Heart left ventricle (tissue), 16 donors: ENCODE measurements at regions of chr19 and their contacts with region 1.

Region 1: GRCh38 chr19:37466798-37467607 is at the start of gene ZNF569:
- DNase-seq: peak; percentile 90 to 93 (median 92)
- ATAC-seq: peak; percentile 82 to 88 (median 85)
- H3K4me3 ChIP-seq: peak within 1 kb of the TSS; percentile 51 to 95 (median 81)
- H3K27ac ChIP-seq: peak within 1 kb of the TSS; percentile 74 to 99 (median 96)
- H3K4me1 ChIP-seq: peaks cover 0 to 32% (median 25%) of the 10 kb centered on the region in 12 donors
- H3K27me3 ChIP-seq: no peaks in the 10 kb centered on the region
- CTCF ChIP-seq: peak in 1 of 12 donors; percentile 25
- POLR2A ChIP-seq: peak in 1 of 2 donors; percentile 46
- total RNA-seq, gene ZNF569: 5.4 to 8.0 (median 6.1) TPM

Region 2: DNA sequence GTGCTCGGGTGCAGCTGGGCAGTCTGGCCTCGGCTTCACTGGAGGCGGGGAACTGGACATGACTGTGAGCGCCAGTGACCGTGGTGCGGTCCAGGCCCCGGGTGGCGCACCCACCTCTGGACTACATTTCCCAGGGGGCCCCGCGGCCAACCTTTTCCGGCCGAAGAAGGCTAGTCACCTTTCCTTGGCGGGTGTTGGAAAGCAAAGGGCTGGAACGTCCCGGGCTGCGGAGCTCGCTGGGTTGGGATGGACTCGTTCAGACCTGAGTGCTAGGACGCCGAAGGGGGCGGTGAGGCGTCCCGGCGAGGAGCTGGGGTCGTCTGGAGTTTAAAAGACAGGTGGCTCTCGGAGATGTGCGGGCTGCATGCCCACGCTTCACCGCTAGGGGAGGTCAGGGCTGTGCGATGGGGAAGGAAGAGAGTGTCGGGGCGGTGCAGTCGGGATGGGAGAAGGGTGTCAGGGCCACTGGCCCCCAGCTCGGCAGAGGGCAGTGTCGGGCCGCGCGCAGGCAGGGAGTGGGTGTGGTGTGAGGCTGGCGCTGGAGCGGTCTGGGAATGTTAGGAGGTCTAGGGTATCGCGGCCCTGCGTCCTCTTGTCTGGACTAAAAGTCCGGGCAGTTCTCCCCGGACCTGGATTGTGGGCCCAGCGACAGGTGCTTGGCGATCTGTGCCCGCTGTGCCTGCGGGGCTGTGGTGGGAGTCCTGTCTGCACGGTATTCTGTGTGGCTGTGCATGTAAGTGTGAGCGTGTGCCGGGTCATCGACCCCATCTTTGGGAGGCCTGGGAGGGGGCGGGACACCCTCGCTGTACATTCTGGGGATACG is 493.8 kb before region 1 on chr19:
- intact Hi-C with region 1: loop called in 2 of 10 experiments (anchors 2 to 5 kb)
- DNase-seq: peak; percentile 88 to 94 (median 90)
- ATAC-seq: peak; percentile 99 to 100 (median 100)
- H3K4me3 ChIP-seq: peak overlapping the region; percentile 24 to 91 (median 72)
- H3K27ac ChIP-seq: peak overlapping the region in 11 of 12 donors; percentile 41 to 89 (median 78)
- H3K4me1 ChIP-seq: peaks cover 0 to 21% (median 11%) of the 10 kb centered on the region in 12 donors
- H3K27me3 ChIP-seq: no peaks in the 10 kb centered on the region
- CTCF ChIP-seq: peak; percentile 74 to 97 (median 92)
- POLR2A ChIP-seq: peak in 1 of 2 donors; percentile 28

Region 3: GRCh38 chr19:37309834-37310575 is 157.0 kb before region 1 on chr19:
- intact Hi-C with region 1: loop called in 3 of 10 experiments (anchors 10 kb)
- DNase-seq: no peak
- ATAC-seq: no peak
- H3K4me3 ChIP-seq: no peak overlapping the region
- H3K27ac ChIP-seq: no peak overlapping the region
- H3K4me1 ChIP-seq: peaks cover 0 to 10% (median 2%) of the 10 kb centered on the region in 12 donors
- H3K27me3 ChIP-seq: no peaks in the 10 kb centered on the region
- CTCF ChIP-seq: peak in 1 of 12 donors; percentile 12
- POLR2A ChIP-seq: no peak

Region 4: DNA sequence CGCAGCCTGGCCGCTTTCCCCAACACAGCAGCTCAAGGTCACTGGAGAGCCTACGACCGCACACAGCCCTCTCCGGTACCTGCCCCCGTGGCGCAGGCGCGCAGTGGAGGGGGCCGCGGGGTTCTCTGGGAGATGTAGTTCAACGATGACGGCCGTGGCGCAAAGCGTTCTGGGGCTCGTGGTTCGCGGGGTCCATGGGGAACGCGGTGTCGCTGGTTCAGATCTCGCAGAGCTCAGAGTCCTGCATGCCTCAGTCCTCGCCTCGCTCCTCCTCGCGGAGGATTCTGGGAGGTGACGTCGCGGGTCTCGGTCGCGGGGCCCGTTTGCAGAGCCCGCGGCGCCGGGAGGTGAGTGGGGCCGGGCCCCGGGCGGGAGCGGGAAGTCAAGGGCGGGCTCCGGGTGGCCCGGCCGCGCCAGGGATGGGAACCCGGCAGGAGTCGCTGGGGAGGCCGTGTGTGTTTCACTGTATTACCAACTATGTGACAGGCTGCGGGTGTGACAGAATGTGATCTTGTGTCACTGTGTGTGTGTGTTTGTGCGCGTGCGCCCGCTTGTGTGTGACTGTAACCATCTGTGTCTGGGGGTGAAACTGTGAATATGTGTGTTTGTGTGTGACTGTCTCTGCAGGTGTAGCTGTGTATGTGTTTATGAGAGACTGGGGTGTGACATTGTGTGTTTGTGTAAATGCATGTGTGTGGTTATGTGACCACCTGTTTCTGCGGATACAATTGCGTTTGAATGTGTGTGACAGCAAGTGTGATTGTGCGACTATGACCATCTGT is 95.9 kb before region 1 on chr19 and contains the start of gene ZNF527:
- intact Hi-C with region 1: loop called in 6 of 10 experiments (anchors 2 to 5 kb)
- DNase-seq: peak; percentile 98 to 99 (median 99)
- ATAC-seq: peak; percentile 99
- H3K4me3 ChIP-seq: peak within 1 kb of the TSS; percentile 39 to 93 (median 78)
- H3K27ac ChIP-seq: peak within 1 kb of the TSS; percentile 66 to 94 (median 89)
- H3K4me1 ChIP-seq: peaks cover 0 to 16% (median 9%) of the 10 kb centered on the region in 12 donors
- H3K27me3 ChIP-seq: no peaks in the 10 kb centered on the region
- CTCF ChIP-seq: peak in 2 of 12 donors; percentile 9 to 25
- POLR2A ChIP-seq: peak; percentile 40 to 95
- total RNA-seq, gene ZNF527: 3.9 to 9.3 (median 6.1) TPM

Region 5: DNA sequence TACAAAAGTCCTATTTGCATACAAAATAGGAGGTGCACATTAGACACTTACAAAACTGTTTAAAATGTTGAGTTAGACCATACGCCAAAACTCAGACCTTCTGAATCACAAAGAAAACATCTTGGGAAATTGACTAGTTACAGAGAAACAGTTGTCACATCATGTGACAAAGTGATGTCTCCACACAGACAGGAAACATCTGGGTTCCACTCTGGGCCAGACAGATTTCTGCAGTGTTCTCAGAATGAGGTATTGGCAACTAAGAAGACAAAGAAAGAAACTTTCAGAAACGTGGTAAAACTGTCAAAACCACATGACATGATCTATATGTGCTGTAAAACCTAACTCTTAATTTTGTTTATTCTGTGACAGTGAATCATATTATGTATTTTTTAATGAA is 46.4 kb after region 1 on chr19:
- intact Hi-C with region 1: loop called in 4 of 10 experiments (anchors 5 kb)
- DNase-seq: no peak
- ATAC-seq: no peak
- H3K4me3 ChIP-seq: no peak overlapping the region
- H3K27ac ChIP-seq: no peak overlapping the region
- H3K4me1 ChIP-seq: no peaks in the 10 kb centered on the region
- H3K27me3 ChIP-seq: no peaks in the 10 kb centered on the region
- CTCF ChIP-seq: no peak
- POLR2A ChIP-seq: no peak

Region 6: DNA sequence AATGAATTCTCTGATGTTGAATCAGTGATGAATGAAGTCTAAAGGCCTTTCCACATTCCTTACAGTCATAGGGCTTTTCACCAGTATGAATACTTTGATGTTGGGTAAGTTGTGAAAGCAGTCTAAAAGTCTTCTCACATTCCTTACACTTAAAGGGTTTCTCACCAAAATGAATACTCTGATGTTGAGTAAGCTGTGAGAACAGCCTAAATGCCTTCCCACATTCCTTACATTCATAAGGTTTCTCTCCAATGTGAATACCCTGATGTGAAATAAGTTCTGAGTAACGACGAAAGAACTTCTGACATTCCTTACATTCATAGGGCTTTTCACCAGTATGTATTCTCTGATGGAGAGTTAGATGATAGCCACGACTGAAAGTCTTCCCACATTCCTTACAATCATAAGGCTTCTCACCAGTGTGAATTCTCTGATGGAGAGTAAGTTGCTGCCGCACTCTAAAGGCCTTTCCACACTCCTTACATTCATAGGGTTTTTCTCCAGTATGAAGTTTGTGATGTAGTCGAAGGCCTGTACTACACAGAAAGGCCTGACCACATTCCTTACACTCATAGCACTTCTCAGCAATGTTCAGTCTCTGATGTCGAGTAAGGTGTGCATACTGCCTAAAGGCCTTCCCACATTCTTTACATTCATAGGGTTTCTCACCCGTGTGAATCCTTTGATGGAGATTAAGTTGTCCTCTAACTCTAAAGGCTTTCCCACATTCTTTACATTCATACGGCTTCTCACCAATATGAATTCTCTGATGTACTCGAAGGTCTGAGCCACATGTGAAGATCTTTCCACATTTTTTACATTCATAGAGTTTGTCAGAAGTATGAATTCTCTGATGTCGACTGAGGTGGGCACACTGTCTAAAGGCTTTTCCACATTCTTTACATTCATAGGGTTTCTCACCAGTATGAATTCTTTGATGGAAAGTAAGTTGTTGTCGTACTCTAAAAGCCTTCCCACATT is 168.4 kb after region 1 on chr19:
- intact Hi-C with region 1: no loop called
- DNase-seq: no peak
- ATAC-seq: no peak
- H3K4me3 ChIP-seq: no peak overlapping the region
- H3K27ac ChIP-seq: no peak overlapping the region
- H3K4me1 ChIP-seq: no peaks in the 10 kb centered on the region
- H3K27me3 ChIP-seq: no peaks in the 10 kb centered on the region
- CTCF ChIP-seq: no peak
- POLR2A ChIP-seq: no peak

Region 7: GRCh38 chr19:37655689-37656371 is 188.8 kb after region 1 on chr19:
- intact Hi-C with region 1: loop called in 2 of 10 experiments (anchors 5 kb)
- DNase-seq: peak; percentile 87 to 92 (median 88)
- ATAC-seq: peak; percentile 73 to 89 (median 88)
- H3K4me3 ChIP-seq: peak overlapping the region; percentile 67 to 90 (median 77)
- H3K27ac ChIP-seq: peak overlapping the region; percentile 80 to 95 (median 91)
- H3K4me1 ChIP-seq: peaks cover 5 to 27% (median 14%) of the 10 kb centered on the region in 12 donors
- H3K27me3 ChIP-seq: no peaks in the 10 kb centered on the region
- CTCF ChIP-seq: no peak
- POLR2A ChIP-seq: peak in 1 of 2 donors; percentile 24